Mammary epithelial cell (primary cell): ENCODE measurements at regions of chr2 and their contacts with region 1.

Region 1: DNA sequence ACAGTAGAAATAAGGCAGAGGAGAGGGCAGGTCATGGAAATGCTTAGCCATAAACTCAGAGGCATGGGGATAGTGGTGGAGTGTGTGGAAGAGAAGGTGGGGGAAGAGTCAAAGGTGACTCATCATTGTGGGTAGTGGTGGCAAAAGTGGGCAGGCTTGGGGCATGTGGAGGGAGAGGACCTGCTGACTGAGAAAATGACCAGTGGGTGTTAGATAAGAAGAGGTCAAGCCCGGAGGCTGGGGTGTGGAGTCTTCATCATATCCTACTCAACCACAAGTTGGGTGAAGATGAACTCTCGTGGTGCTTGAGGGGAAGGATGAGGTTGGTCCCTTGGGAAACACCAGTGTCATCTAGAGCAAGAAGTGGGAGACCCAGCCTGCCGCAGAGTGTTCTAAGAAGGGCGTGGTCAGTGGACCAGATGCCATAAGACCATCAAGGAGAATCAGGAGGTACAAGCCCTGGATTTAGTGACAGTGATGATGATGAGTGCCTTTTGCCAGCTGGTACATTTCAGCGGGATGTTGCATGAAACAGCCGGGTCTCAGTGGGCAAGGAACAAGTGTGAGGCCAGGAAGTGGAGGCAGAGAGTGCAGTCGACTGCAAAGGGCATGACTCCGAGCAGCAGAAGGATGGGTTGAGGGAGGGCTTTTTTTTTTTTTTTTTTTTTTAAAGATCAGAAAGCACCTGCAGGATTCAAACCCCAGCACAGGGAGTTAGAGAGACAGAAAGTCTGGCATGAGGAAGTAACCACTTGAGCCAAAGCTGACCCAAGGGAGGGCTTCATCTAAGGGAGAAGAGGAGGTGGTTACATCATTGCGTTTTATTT is 122.6 kb upstream of the SPRED2 start:
- DNase-seq: peak; percentile 40
- H3K4me3 ChIP-seq: no peak overlapping the region
- H3K27ac ChIP-seq: no peak overlapping the region
- H3K4me1 ChIP-seq: peaks cover 6% of the 10 kb centered on the region
- H3K27me3 ChIP-seq: no peaks in the 10 kb centered on the region
- CTCF ChIP-seq: no peak

Region 2: DNA sequence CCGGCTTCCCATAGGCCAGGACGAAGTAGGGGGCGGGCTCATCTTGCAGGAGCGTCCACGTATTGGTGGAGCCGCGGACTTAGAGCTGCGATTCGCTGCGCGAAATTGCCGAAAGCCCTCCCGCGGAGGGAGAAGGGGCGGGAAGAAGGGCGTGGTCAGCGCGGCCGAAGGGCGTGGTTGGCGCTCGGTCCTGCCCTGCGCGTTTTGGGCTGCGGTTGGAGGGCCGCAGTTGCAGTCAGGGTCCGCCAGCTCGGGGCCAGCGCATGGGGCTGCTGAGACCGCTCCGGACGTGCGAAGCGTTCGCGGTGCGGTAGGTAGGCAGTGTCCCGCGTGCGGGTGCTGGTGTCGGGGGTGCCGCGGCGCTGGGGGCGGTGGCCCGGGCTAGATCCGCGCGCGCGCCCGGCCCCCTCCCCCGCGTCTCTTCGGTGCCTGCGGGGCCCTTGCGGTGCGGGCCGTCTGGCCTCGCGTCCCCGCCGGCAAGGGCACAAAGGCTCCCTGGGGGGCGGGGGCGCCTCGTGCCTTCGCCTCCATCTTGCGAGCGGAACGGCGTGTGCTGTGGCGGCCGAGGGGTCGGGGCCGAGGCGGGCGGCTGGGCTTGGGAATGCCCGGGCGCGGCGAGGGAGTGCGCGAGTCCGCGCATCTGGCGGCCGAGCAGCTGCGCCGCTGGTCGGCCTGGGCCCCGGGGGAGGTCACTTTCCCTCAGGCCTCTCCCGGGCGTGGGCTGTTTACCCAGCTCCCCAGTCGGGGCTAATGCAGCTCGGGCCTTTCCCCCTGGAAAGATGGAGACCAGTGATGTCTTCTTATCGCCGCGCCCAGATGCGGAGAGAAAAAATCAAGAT is 498.5 kb before region 1 on chr2 and contains the start of gene CEP68:
- CTCF ChIA-PET with region 1: no interaction called
- dilution Hi-C with region 1: no loop called
- in situ Hi-C with region 1: loop called in 1 of 2 experiments (anchors 25 kb)
- intact Hi-C with region 1: no loop called
- DNase-seq: peak; percentile 96
- H3K4me3 ChIP-seq: peak within 1 kb of the TSS; percentile 57 to 68 (median 65)
- H3K27ac ChIP-seq: peak within 1 kb of the TSS; percentile 26
- H3K4me1 ChIP-seq: peaks cover 12% of the 10 kb centered on the region
- H3K27me3 ChIP-seq: no peaks in the 10 kb centered on the region
- CTCF ChIP-seq: no peak
- total RNA-seq, gene CEP68: 9.0 to 9.3 TPM

Region 3: GRCh38 chr2:65164426-65164891 is 390.5 kb before region 1 on chr2:
- CTCF ChIA-PET with region 1: no interaction called
- dilution Hi-C with region 1: no loop called
- in situ Hi-C with region 1: no loop called
- intact Hi-C with region 1: no loop called
- DNase-seq: no peak
- H3K4me3 ChIP-seq: no peak overlapping the region
- H3K27ac ChIP-seq: no peak overlapping the region
- H3K4me1 ChIP-seq: no peaks in the 10 kb centered on the region
- H3K27me3 ChIP-seq: no peaks in the 10 kb centered on the region
- CTCF ChIP-seq: no peak

Region 4: GRCh38 chr2:65264821-65265670 is 289.9 kb before region 1 on chr2:
- CTCF ChIA-PET with region 1: interaction called, 3 read pairs
- dilution Hi-C with region 1: no loop called
- in situ Hi-C with region 1: loop called in 1 of 2 experiments (anchors 10 kb)
- intact Hi-C with region 1: loop called (anchors 1 kb)
- DNase-seq: peak; percentile 51
- H3K4me3 ChIP-seq: no peak overlapping the region
- H3K27ac ChIP-seq: no peak overlapping the region
- H3K4me1 ChIP-seq: no peaks in the 10 kb centered on the region
- H3K27me3 ChIP-seq: no peaks in the 10 kb centered on the region
- CTCF ChIP-seq: peak; percentile 53 to 64

Region 5: GRCh38 chr2:65320042-65320725 is 234.8 kb before region 1 on chr2:
- CTCF ChIA-PET with region 1: no interaction called
- dilution Hi-C with region 1: no loop called
- in situ Hi-C with region 1: no loop called
- intact Hi-C with region 1: loop called (anchors 1 kb)
- DNase-seq: peak; percentile 94
- H3K4me3 ChIP-seq: no peak overlapping the region
- H3K27ac ChIP-seq: peak overlapping the region; percentile 77
- H3K4me1 ChIP-seq: peaks cover 58% of the 10 kb centered on the region
- H3K27me3 ChIP-seq: no peaks in the 10 kb centered on the region
- CTCF ChIP-seq: peak; percentile 45 to 54

Region 6: DNA sequence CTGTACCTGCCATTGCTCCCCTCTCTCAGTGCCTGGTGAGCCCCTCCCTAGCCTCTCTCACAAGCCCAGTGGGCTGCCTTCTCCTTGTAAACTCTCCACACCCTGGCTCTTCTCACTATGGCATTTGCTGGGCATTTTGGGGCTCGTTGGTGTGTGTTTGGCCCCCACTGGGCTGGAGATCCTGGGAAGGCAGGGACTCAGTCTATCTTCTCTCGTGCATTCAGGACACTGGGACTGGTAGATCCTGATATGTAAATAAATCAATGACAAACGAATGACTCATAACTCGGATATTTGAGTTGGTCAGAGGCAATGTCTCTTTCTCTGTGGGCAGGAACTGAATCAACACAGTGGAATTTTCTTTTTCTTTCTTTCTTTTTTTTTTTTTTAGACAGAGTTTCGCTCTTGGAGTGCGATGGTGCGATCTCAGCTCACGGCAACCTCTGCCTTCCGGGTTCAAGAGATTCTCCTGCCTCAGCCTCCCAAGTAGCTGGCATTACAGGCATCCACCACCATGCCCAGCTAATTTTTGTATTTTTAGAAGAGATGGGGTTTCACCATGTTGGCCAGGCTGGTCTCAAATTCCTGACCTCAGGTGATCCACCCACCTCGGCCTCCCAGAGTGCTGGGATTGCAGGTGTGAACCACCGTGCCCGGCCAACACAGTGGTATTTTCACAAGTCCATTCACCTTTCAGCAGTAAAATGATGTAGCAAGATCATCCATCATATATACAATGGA is 22.1 kb after region 1 on chr2:
- CTCF ChIA-PET with region 1: no interaction called
- dilution Hi-C with region 1: no loop called
- in situ Hi-C with region 1: no loop called
- intact Hi-C with region 1: loop called (anchors 2 kb)
- DNase-seq: peak; percentile 92
- H3K4me3 ChIP-seq: no peak overlapping the region
- H3K27ac ChIP-seq: peak overlapping the region; percentile 89
- H3K4me1 ChIP-seq: peaks cover 16% of the 10 kb centered on the region
- H3K27me3 ChIP-seq: no peaks in the 10 kb centered on the region
- CTCF ChIP-seq: no peak

Region 7: GRCh38 chr2:65647249-65647842 is 92.4 kb after region 1 on chr2:
- CTCF ChIA-PET with region 1: no interaction called
- dilution Hi-C with region 1: no loop called
- in situ Hi-C with region 1: no loop called
- intact Hi-C with region 1: no loop called
- DNase-seq: no peak
- H3K4me3 ChIP-seq: no peak overlapping the region
- H3K27ac ChIP-seq: no peak overlapping the region
- H3K4me1 ChIP-seq: no peaks in the 10 kb centered on the region
- H3K27me3 ChIP-seq: peaks cover 2% of the 10 kb centered on the region
- CTCF ChIP-seq: no peak